GM12878 (cell line): ENCODE measurements at regions of chr22 and their contacts with region 1.

Region 1: DNA sequence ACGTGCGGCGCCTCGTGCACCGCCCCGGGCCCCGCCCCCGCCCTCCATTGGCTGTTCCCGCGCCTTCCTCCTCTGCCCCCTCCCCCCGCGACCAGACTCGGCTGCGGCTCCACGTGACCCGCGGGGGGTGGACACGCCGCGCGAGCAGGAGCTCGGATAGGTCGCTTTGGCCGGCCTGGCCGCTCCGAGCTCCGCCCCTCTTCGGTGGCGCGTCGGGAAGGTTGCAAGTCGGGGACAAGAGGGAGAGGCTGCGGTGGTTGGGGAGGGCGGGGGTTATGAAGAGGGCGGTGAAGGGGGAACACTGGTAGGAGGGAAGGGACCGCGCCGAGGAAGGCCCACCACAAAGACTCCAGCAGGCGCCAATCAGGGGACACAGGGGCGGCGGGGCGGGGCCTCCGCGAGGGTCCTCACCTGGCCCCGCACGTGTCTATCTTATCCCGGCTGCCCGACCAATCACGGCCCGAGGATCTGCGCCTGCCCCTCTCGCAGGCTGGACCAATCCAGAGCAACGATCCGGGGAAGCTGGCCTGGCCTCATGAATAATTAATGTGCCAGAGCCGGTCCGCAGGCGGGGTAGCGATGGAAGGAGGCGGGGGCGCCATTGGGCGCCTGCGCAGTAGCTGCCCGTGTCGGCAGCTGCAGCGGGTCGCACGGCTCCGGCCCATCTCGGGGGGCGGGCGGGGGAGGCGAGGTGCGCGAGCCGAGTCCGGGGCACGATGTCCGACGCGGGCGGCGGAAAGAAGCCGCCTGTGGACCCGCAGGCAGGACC is at the start of gene TEF:
- DNase-seq: peak; percentile 91
- ATAC-seq: peak; percentile 97
- H3K4me3 ChIP-seq: peak within 1 kb of the TSS; percentile 90
- H3K27ac ChIP-seq: peak within 1 kb of the TSS; percentile 74
- H3K4me1 ChIP-seq: peaks cover 7% of the 10 kb centered on the region
- H3K27me3 ChIP-seq: no peaks in the 10 kb centered on the region
- CTCF ChIP-seq: no peak
- EP300 ChIP-seq: no peak
- POLR2A ChIP-seq: peak; percentile 67
- RAD21 ChIP-seq: no peak
- polyA plus RNA-seq, gene TEF: 0.23 to 0.27 TPM

Region 2: GRCh38 chr22:41285820-41286638 is 95.5 kb before region 1 on chr22 and contains the start of gene RANGAP1:
- CTCF ChIA-PET with region 1: no interaction called
- POLR2A ChIA-PET with region 1: interaction called, 12 read pairs
- RAD21 ChIA-PET with region 1: interaction called, 9 read pairs
- SMC1A ChIA-PET with region 1: interaction called, 3 read pairs
- in situ Hi-C with region 1: no loop called
- intact Hi-C with region 1: loop called (anchors 1 kb)
- DNase-seq: peak; percentile 98
- ATAC-seq: peak; percentile 98
- H3K4me3 ChIP-seq: peak within 1 kb of the TSS; percentile 96
- H3K27ac ChIP-seq: peak within 1 kb of the TSS; percentile 81
- H3K4me1 ChIP-seq: peaks cover 7% of the 10 kb centered on the region
- H3K27me3 ChIP-seq: no peaks in the 10 kb centered on the region
- CTCF ChIP-seq: peak in 2 of 3 experiments; percentile 8 to 15; a peak in 1 of 6 replicates
- EP300 ChIP-seq: peak; percentile 21 to 46; a peak in 1 of 4 replicates
- POLR2A ChIP-seq: peak; percentile 92
- RAD21 ChIP-seq: no peak
- polyA plus RNA-seq, gene RANGAP1: 2.5 to 9.1 TPM

Region 3: DNA sequence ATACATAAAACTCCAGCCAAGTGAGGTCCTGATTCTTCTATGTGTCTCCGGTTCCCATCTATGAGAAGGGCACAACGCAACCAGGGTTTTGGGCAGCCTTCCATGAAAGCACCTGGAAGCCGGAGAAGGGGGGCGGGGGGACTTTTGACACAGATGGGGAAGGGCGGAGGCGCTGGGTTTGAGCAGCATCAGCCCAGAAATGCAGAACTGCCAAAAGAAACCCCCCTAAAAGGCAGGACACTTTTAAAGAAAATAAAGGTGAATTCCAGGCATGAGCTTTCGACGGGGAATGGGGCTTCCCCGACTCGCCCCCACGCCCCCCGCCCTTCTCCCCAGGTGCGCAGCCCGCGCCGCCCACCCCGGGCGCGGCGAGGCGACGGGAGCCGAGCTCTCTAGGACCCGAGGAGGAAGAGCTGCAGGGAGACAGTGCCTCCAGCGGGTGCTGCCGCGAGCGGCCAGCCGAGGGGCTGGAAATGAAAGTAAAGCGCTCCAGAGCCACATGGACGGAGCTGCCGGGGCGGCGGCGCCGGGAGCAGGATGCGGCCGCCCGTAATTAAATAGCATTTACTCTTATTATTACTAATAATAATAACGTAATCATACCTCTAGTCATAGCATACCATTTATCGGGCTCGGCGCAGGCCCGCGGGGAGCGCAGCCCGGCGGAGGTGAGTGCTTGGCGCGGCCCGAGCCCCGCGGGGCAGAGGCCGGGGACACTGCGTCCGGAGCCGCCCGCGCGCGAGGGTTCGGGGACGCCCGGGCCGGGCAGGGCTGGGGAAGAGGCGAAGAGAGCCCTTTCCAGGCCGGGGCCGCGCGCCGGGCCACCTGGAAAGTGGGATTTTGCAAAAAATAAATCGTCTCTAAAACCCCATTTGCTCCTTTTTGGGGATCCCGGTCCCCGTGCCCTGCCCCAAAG is 80.2 kb before region 1 on chr22 and contains the start of gene ZC3H7B:
- CTCF ChIA-PET with region 1: no interaction called
- POLR2A ChIA-PET with region 1: interaction called, 4 read pairs
- RAD21 ChIA-PET with region 1: interaction called, 14 read pairs
- SMC1A ChIA-PET with region 1: no interaction called
- in situ Hi-C with region 1: no loop called
- intact Hi-C with region 1: no loop called
- DNase-seq: peak; percentile 28
- ATAC-seq: peak; percentile 98
- H3K4me3 ChIP-seq: peak within 1 kb of the TSS; percentile 93
- H3K27ac ChIP-seq: peak within 1 kb of the TSS; percentile 91
- H3K4me1 ChIP-seq: peaks cover 4% of the 10 kb centered on the region
- H3K27me3 ChIP-seq: no peaks in the 10 kb centered on the region
- CTCF ChIP-seq: peak; percentile 57 to 66 (median 58)
- EP300 ChIP-seq: no peak
- POLR2A ChIP-seq: peak; percentile 84
- RAD21 ChIP-seq: peak; percentile 45
- polyA plus RNA-seq, gene ZC3H7B: 0.26 to 0.34 TPM

Region 4: DNA sequence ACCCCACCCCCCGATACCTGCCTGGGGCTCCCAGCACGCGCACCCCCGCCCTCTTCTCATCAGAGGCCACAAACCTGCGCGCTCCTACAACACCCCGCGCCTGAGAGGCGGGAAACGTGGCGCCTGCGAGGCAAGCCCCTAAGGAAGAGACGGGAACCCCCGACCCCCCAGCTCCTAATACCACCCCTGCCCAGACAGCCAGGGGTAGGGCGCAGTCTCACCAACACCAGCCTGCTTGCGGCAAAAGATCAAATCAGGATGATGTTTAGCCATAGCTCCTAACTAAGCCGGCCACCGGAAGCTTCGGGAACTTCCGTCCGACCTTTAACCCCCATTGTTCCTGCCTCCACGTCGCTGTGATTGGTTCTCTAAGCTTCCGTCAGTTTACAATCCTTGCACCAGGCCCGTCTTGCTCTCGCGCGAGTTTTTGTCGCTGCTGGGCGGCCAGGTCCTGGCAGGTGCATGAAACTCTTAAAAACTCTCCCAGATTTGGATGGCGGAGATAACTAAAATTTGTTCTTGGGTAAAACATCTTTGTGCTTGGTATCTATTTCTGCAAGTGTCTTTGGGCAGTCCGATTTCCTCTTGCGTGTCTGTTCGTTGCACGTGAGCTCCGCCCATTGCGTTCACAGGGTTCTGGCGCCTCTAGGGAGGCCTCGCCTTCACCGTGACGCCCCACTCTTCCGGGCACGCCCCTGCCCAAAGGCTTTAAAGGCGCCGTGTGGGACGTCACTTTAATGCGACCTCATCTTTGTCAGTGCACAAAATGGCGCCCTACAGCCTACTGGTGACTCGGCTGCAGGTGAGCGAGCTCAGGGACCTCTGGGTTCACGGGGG is 87.1 kb after region 1 on chr22 and contains the starts of genes ACO2 and PHF5A:
- CTCF ChIA-PET with region 1: no interaction called
- POLR2A ChIA-PET with region 1: interaction called, 5 read pairs
- RAD21 ChIA-PET with region 1: interaction called, 13 read pairs
- SMC1A ChIA-PET with region 1: no interaction called
- in situ Hi-C with region 1: no loop called
- intact Hi-C with region 1: no loop called
- DNase-seq: peak; percentile 98
- ATAC-seq: peak; percentile 95
- H3K4me3 ChIP-seq: peak within 1 kb of the TSS; percentile 80
- H3K27ac ChIP-seq: peak within 1 kb of the TSS; percentile 97
- H3K4me1 ChIP-seq: peaks cover 14% of the 10 kb centered on the region
- H3K27me3 ChIP-seq: no peaks in the 10 kb centered on the region
- CTCF ChIP-seq: no peak
- EP300 ChIP-seq: peak in 1 of 2 experiments; percentile 32; a peak in 1 of 4 replicates
- POLR2A ChIP-seq: peak; percentile 81
- RAD21 ChIP-seq: no peak
- polyA plus RNA-seq, gene ACO2: 21.4 to 22.3 TPM
- polyA plus RNA-seq, gene PHF5A: 40.5 to 77.0 TPM